Activated naive CD4-positive, alpha-beta T cell treated with anti-CD3 and anti-CD28 coated beads, Interleukin-2, amount 10 ng/mL, durations not matched to agents 7 days and 5 days (primary cell): ENCODE measurements at regions of chr11 and their contacts with region 1.

Region 1: DNA sequence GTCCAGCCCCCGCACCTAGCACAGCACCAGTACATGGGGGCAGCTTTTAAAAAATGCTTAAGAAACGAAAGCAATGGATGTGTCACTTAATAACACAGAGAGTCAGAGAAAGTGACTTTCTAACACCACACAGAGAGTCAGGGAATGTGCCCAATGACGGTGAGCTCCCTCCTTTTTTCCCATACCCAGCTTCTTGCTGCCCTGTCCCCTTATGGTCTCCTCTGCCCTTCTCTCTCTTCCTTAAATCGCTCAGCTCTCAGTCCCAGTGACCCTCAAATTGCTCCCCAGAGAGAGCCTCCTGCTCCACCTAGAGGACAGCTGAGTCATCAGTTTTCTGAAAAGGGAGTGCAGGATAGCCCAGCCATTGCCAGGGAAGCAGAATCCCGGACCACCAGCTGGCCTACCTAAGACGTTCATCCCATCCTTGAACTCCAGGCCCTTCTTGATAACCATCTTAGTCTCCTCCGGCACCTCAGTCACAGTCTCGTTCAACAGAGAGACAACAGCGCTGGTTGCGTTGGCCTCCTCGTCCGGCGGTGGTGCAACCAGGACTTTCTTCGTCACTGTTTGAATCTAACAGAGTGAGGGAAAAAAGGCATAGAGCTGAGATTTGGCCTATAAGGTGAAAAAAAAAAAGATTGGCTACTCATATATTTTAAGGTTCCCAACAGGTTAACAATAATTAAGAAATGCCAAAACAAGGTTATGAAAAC is 113.5 kb downstream of the SLC1A2 start:
- DNase-seq: peak; percentile 56
- H3K4me3 Mint-ChIP-seq: no peak overlapping the region
- H3K27ac Mint-ChIP-seq: no peak overlapping the region
- H3K4me1 Mint-ChIP-seq: peaks cover 15% of the 10 kb centered on the region
- H3K27me3 Mint-ChIP-seq: peaks cover 8% of the 10 kb centered on the region

Region 2: DNA sequence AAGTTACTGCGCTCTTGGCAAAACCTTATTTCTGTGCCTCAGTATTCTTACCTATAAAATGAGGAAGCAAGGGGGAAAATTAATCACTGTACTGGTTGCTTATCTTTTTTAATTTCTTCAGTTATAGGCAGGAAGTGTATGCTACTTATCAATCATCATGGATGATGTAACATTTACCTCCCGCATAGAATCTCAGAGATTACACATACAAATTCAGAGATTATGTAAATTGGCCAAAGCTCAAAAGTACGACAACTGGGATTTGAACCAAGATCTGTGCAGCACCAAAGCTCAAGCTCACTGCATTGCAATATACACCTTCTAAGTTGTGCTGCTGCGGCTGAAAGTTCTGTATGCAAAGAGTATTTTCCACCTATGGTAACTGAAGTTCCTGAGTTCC is 306.4 kb before region 1 on chr11:
- CTCF ChIA-PET with region 1: interaction called, 29 read pairs
- DNase-seq: no peak
- H3K4me3 Mint-ChIP-seq: no peak overlapping the region
- H3K27ac Mint-ChIP-seq: no peak overlapping the region
- H3K4me1 Mint-ChIP-seq: peaks cover 20% of the 10 kb centered on the region
- H3K27me3 Mint-ChIP-seq: no peaks in the 10 kb centered on the region

Region 3: GRCh38 chr11:35246745-35247144 is 59.1 kb before region 1 on chr11:
- CTCF ChIA-PET with region 1: interaction called, 10 read pairs
- DNase-seq: no peak
- H3K4me3 Mint-ChIP-seq: no peak overlapping the region
- H3K27ac Mint-ChIP-seq: no peak overlapping the region
- H3K4me1 Mint-ChIP-seq: peaks cover 43% of the 10 kb centered on the region
- H3K27me3 Mint-ChIP-seq: no peaks in the 10 kb centered on the region

Region 4: DNA sequence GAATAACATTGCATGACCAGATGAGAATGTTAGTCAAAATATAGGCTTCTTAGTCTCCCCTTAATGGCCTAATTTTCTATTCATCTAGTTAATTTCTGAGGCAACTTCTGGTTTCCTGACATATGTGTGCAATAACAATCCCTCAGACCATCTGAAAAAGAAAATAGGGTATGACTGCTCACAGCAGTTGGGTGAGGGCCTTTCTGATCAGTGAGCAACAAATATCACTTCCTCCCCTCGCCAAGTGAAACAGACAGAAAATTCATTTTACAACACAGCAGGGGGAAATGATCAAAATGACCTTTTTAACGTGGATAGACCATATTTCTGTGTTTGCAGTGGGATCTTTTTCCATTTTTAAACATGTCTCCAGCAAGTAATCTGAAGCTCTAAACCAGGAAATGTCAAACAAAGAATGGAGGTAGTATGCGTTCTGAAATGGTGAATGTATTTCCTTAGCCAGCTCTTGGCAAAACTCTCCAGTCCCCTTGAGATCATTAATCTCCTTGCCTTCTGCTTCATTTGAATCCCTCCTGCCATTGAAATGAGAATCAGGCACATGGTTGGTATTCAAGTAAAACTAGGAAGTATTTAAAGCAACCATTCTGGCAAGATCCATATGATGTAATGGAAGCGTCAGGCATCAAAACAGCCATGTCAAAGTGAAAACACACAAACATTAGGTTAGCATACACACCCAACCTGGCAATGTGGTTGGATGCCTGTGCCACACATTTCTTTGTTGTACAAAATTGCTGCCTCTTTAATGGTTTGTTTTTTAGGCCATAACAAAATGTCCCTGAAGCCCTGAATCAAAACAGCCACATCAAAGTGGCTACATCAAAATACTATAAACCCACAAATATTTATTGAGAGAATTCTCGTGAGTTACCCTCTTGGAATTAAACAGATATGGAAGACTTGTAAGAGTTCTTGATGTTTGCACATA is 13.4 kb after region 1 on chr11:
- CTCF ChIA-PET with region 1: interaction called, 11 read pairs
- DNase-seq: no peak
- H3K4me3 Mint-ChIP-seq: no peak overlapping the region
- H3K27ac Mint-ChIP-seq: peak overlapping the region; percentile 19
- H3K4me1 Mint-ChIP-seq: peaks cover 21% of the 10 kb centered on the region
- H3K27me3 Mint-ChIP-seq: peaks cover 21% of the 10 kb centered on the region